PC-3 (cell line): ENCODE measurements at regions of chr15 and their contacts with region 1.

Region 1: GRCh38 chr15:45126535-45127158 is 3.0 kb downstream of the DUOXA1 start:
- DNase-seq: peak; percentile 76
- ATAC-seq: peak; percentile 60
- H3K4me3 ChIP-seq: no peak overlapping the region
- H3K27ac ChIP-seq: no peak overlapping the region
- H3K4me1 ChIP-seq: peaks cover 15% of the 10 kb centered on the region
- H3K27me3 ChIP-seq: no peaks in the 10 kb centered on the region
- CTCF ChIP-seq: peak; percentile 96

Region 2: GRCh38 chr15:44968475-44968874 is 158.2 kb before region 1 on chr15:
- CTCF ChIA-PET with region 1: no interaction called
- POLR2A ChIA-PET with region 1: no interaction called
- intact Hi-C with region 1: loop called (anchors 10 kb)
- DNase-seq: no peak
- ATAC-seq: no peak
- H3K4me3 ChIP-seq: no peak overlapping the region
- H3K27ac ChIP-seq: no peak overlapping the region
- H3K4me1 ChIP-seq: no peaks in the 10 kb centered on the region
- H3K27me3 ChIP-seq: 0 out of 2 replicates have a peak, but pooled peaks cover 5% of the 10 kb centered on the region
- CTCF ChIP-seq: no peak

Region 3: GRCh38 chr15:45169608-45170480 is 43.2 kb after region 1 on chr15:
- CTCF ChIA-PET with region 1: no interaction called
- POLR2A ChIA-PET with region 1: no interaction called
- intact Hi-C with region 1: no loop called
- DNase-seq: no peak
- ATAC-seq: no peak
- H3K4me3 ChIP-seq: no peak overlapping the region
- H3K27ac ChIP-seq: no peak overlapping the region
- H3K4me1 ChIP-seq: peaks cover 6% of the 10 kb centered on the region
- H3K27me3 ChIP-seq: no peaks in the 10 kb centered on the region
- CTCF ChIP-seq: no peak

Region 4: GRCh38 chr15:45279024-45279698 is 152.5 kb after region 1 on chr15:
- CTCF ChIA-PET with region 1: interaction called, 3 read pairs
- POLR2A ChIA-PET with region 1: no interaction called
- intact Hi-C with region 1: loop called (anchors 2 kb)
- DNase-seq: peak; percentile 99
- ATAC-seq: peak; percentile 99
- H3K4me3 ChIP-seq: peak overlapping the region; percentile 75
- H3K27ac ChIP-seq: peak overlapping the region; percentile 36
- H3K4me1 ChIP-seq: peaks cover 13% of the 10 kb centered on the region
- H3K27me3 ChIP-seq: no peaks in the 10 kb centered on the region
- CTCF ChIP-seq: no peak